ENCODE measurements at regions of chr5 and their contacts with region 1.

Region 1: DNA sequence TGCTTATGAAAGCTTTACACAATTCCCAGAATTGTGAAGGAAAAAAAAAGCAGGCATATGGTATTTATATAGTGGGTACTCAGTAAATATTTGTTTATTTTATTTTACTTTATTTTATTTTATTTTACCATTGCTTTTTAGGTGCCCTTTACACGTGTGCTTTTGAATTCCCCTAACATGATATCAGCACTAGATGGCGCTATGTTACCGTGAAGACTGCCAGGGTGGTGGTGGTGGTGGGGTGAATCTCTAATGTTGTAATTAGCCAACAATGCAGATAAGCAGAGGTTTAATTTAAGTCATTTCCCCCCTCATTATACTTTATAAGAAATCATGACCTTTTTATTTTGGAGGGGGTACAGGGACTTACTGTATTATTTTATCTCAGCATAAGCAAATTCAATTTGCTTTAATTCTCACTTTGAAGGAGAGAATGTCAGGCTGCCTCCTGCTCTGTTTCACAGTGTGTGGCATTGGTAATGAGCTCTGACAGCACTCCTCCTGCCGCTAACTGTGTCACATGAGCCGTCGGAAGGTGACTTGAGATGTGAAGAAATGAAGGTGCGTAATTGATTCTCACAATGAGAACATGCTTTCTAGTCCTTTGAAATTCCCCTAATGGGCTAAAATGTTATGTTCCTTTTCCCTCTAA is 165.6 kb downstream of the YTHDC2 start:
- DNase-seq: peak; percentile 56
- H3K4me3 Mint-ChIP-seq: no peak overlapping the region
- H3K27ac Mint-ChIP-seq: no peak overlapping the region
- H3K4me1 Mint-ChIP-seq: no peaks in the 10 kb centered on the region
- H3K27me3 Mint-ChIP-seq: no peaks in the 10 kb centered on the region

Region 2: DNA sequence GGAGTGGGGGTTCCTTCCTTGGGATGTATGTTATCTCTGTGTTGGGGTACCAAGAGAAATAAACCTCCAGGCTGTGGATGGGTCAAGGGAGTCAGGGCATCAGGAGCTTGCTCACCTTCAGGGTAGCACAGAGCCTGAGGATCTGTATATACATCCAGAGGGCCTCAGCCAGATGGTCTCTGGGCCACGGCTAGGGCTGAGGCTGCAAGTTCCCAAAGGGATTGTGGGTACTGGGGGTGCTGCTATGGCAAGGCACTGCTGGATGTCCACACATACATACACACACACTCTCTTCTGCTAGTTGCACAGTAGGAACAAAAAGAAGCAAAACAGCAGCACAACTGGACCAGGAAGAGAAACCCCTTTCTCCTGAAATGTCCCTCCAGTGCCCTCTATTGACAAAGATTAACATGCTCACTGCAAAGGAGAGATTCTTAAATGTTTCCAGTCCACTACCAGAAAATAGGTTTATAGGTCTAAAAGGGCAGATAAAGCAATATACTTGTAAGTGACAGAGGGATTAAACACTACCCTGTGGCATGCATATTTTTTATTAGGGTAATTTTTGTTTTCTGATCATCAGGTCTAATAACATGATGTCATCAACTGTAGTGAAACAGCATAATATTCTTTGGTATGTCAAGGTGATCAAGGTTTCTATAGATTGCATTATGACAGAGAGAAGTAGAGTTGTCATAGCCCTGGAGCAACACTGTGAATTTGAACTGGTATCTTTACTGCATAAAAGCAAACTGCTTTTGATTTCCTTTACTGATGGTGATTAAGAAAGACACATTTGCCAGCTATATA is 626.6 kb after region 1 on chr5:
- CTCF ChIA-PET with region 1: no interaction called
- intact Hi-C with region 1: loop called (anchors 5 kb)
- DNase-seq: no peak
- H3K4me3 Mint-ChIP-seq: no peak overlapping the region
- H3K27ac Mint-ChIP-seq: no peak overlapping the region
- H3K4me1 Mint-ChIP-seq: no peaks in the 10 kb centered on the region
- H3K27me3 Mint-ChIP-seq: no peaks in the 10 kb centered on the region

Region 3: DNA sequence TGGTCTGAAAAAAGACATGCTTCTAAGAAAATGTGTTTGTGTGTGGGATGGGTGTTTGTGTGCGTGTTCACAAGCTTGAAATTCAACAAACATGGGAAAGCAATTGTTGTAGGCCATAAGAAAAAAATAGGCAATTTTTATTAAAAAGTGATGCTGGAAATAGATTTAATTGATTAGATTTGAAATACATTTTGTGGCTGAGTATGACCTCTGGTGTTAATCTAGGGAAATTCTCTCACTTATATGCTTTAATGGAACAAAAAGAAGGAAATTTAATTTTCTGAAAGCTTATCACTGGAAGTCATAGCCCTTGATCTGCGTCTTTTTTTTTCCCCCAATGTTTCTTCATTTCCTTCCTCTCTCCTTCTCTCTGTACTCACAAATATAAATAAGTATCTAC is 679.3 kb after region 1 on chr5:
- CTCF ChIA-PET with region 1: no interaction called
- intact Hi-C with region 1: loop called (anchors 5 kb)
- DNase-seq: no peak
- H3K4me3 Mint-ChIP-seq: no peak overlapping the region
- H3K27ac Mint-ChIP-seq: no peak overlapping the region
- H3K4me1 Mint-ChIP-seq: peaks cover 5% of the 10 kb centered on the region
- H3K27me3 Mint-ChIP-seq: peaks cover 33% of the 10 kb centered on the region

Region 4: GRCh38 chr5:114449860-114450421 is 770.9 kb after region 1 on chr5:
- CTCF ChIA-PET with region 1: interaction called, 13 read pairs
- intact Hi-C with region 1: loop called (anchors 1 kb)
- DNase-seq: peak; percentile 68
- H3K4me3 Mint-ChIP-seq: no peak overlapping the region
- H3K27ac Mint-ChIP-seq: no peak overlapping the region
- H3K4me1 Mint-ChIP-seq: peaks cover 4% of the 10 kb centered on the region
- H3K27me3 Mint-ChIP-seq: peaks cover 3% of the 10 kb centered on the region

Region 5: DNA sequence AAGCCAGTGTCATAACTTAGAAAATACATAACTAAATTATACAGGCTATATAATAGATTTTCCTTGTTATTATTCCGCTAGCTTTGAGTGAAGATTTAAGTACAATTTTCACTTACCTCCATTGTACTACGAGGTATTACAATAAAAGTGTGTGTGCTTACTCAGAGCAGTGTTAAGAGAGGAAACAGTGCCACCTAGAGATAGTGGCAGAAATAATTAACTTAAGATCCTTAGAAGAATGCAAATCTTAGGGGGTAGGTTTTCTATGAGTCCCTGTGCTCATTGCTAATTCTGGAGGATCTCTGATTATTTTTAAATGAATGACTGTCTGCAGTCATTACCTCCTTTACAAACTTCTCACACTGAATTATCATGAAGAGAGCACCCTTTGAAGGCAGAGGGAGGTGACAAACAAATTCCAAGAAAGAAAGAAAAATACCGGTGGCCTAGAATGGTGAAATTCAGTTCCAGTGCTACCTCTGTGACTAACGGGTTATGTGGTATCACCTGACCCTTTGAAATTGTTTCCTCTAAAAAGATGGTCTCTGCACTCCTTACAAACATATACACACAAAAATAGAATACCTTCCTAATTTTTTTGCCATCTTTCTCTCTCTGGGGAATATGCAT is 1110.8 kb after region 1 on chr5:
- CTCF ChIA-PET with region 1: no interaction called
- intact Hi-C with region 1: loop called (anchors 2 kb)
- DNase-seq: no peak
- H3K4me3 Mint-ChIP-seq: no peak overlapping the region
- H3K27ac Mint-ChIP-seq: no peak overlapping the region
- H3K4me1 Mint-ChIP-seq: no peaks in the 10 kb centered on the region
- H3K27me3 Mint-ChIP-seq: no peaks in the 10 kb centered on the region

Region 6: DNA sequence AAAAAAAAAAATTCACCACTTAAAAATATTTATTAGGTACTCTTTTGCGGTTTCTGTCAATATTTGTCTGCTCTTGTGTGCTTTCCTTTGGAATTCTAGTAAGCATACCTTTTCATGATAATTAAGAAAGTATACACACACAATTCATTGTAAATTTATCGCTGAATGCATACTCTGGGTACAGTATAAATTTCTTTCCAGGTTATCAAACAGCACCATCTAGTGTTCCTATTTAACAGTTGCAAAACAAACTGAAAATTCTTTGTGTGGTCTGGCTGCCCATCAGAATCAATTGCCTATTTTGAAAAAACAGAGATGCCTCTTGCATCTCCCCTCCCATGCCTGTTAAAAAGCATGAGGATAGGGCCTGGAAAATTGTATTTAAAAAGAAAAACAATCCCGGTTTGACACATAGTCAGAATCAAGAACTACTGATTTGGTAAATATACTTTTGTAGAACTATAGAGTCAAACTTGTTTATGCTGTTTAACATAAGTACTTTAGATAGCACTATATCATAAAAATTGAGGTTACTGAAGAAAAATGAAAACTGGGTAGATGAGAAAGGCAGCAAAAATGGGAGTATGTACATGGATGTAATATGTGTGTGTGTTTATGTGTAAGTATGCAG is 1567.4 kb after region 1 on chr5:
- CTCF ChIA-PET with region 1: no interaction called
- intact Hi-C with region 1: loop called (anchors 5 kb)
- DNase-seq: no peak
- H3K4me3 Mint-ChIP-seq: no peak overlapping the region
- H3K27ac Mint-ChIP-seq: no peak overlapping the region
- H3K4me1 Mint-ChIP-seq: peaks cover 25% of the 10 kb centered on the region
- H3K27me3 Mint-ChIP-seq: no peaks in the 10 kb centered on the region

Region 7: DNA sequence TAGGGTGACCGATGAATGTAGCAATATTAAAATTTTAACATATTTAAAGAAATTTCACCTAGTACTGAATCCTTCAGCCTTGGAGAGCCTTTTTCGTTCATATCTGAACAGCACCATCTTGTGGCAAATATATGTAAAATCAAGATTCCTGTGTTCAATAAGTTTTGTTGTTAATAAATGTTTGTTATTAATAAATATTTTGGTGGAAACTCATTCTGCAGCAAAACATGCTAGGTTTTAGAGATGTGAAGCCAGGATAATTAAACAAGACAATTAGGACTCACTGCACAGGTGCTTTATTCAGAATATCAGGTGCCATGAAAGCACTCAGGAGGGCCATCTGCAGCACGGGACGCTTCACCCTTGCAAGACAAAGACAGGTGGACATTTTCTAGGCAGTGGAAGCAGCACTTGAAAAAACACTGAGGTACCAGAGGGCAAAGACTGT is 1907.6 kb after region 1 on chr5:
- CTCF ChIA-PET with region 1: no interaction called
- intact Hi-C with region 1: loop called (anchors 5 kb)
- DNase-seq: no peak
- H3K4me3 Mint-ChIP-seq: no peak overlapping the region
- H3K27ac Mint-ChIP-seq: no peak overlapping the region
- H3K4me1 Mint-ChIP-seq: no peaks in the 10 kb centered on the region
- H3K27me3 Mint-ChIP-seq: no peaks in the 10 kb centered on the region